ENCODE measurements at regions of chr7 and their contacts with region 1.

Region 1: GRCh38 chr7:70376561-70377031 is 755.3 kb upstream of the GALNT17 start:
- DNase-seq: no peak
- ATAC-seq: no peak
- H3K4me3 ChIP-seq: no peak overlapping the region
- H3K27ac ChIP-seq: no peak overlapping the region
- H3K4me1 ChIP-seq: peaks cover 0 to 5% of the 10 kb centered on the region in 2 donors
- H3K27me3 ChIP-seq: no peaks in the 10 kb centered on the region

Region 2: GRCh38 chr7:70322856-70323255 is 53.7 kb before region 1 on chr7:
- intact Hi-C with region 1: loop called in 1 of 2 experiments (anchors 5 kb)
- DNase-seq: no peak
- ATAC-seq: no peak
- H3K4me3 ChIP-seq: no peak overlapping the region
- H3K27ac ChIP-seq: no peak overlapping the region
- H3K4me1 ChIP-seq: no peaks in the 10 kb centered on the region
- H3K27me3 ChIP-seq: no peaks in the 10 kb centered on the region